Sigmoid colon (tissue), 7 donors: ENCODE measurements at regions of chr1 and their contacts with region 1.

Region 1: GRCh38 chr1:3649342-3650247 is at the start of gene WRAP73:
- DNase-seq: peak; percentile 93
- H3K4me3 ChIP-seq: peak within 1 kb of the TSS; percentile 73 to 92 (median 80)
- H3K27ac ChIP-seq: peak within 1 kb of the TSS in 3 of 4 donors; percentile 38 to 50 (median 42)
- H3K4me1 ChIP-seq: peaks cover 0 to 39% (median 38%) of the 10 kb centered on the region in 4 donors
- H3K27me3 ChIP-seq: peaks cover 29 to 43% (median 43%) of the 10 kb centered on the region in 3 donors
- CTCF ChIP-seq: no peak
- EP300 ChIP-seq: no peak
- POLR2A ChIP-seq: peak; percentile 75 to 83
- total RNA-seq, gene WRAP73: 11.4 to 17.2 (median 14.8) TPM

Region 2: DNA sequence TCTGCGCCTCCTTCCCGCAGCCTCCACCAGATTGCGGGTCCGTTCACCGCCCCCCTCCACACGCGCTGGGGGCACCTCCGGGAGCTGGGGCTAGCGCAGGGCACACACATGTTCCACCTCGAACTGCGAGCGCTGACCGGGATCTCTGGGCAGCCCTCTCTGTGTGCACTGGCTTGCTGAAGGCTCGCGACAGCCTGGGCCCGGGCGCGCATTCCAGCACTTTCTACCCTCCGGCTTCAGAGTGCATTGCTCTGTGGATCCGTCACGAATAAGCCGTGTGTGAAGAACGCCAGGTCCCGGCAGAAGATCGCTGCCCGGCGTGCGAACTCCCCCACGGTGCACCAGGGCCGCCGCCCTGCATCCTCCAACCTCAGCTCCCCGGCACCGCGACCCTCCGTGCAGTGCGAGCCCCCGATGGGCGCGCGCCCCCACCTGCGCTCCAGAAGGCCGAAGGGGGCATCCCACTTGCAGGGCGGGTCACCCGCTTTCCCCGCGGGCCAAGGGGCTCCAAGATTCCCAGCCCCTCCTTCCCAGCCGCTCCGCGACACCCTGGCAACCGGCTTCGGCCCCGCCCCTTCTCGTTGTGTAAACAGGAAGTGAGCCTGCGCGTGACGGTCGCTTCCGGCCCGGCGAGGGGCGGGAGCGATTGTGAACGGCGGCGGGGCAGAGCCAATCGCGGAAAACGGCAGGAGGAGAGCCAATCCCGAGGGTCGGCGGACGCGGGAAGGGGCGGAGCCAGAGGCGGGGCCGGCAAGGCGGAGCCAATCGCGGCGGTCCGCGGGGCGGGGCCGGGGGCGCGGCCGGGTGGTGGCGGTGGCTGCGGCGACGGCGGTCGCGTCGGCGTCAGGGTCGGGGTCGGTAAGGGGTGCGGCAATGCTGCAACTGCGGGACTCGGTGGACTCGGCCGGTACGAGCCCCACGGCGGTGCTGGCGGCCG is 25.1 kb before region 1 on chr1 and contains the start of gene TPRG1L:
- intact Hi-C with region 1: loop called (anchors 1 kb)
- DNase-seq: peak; percentile 99
- H3K4me3 ChIP-seq: peak within 1 kb of the TSS; percentile 84 to 99 (median 98)
- H3K27ac ChIP-seq: peak within 1 kb of the TSS; percentile 82 to 92 (median 90)
- H3K4me1 ChIP-seq: peaks cover 0 to 31% (median 28%) of the 10 kb centered on the region in 4 donors
- H3K27me3 ChIP-seq: no peaks in the 10 kb centered on the region
- CTCF ChIP-seq: no peak
- EP300 ChIP-seq: peak in 1 of 4 donors; percentile 20
- POLR2A ChIP-seq: no peak
- total RNA-seq, gene TPRG1L: 34.9 to 51.8 (median 43.2) TPM